ENCODE measurements at regions of chr19 and their contacts with region 1.

Region 1: DNA sequence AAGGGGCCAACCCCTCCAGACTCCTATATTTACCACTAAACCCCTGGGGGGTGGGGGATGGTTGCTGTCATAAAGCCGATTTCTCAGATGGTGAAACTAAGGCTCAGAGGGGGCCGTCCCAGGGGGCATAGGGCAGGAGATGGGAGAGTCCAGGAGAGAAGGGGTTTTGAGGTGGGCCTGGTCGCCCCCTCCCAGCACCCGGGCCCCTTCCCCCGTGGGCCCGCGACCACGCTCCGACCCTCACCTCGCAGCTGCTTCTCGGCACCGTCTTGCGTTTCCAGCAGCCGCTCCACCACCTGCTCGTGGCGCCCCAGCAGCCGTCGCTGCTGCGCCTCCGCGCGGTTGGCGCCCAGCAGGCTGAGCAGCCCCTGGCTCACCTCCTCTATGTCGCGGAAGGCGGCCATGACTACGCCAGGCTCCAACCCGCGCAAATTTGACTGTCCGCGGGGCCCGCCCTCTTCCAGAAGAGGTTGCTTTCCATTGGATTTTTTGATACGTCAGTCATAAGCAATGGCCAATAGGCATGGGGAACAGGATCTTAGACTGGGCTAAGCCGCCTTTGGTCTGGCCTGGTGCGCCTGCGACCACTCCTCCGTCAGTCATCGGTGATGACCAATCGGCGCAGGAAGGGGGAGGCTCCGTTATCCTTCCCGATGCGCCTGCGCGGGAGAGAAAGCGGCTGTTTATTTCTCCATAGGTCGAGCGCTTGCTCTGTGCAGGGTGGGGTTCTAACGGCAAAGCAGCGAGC is at the start of gene SPC24:
- DNase-seq: peak in 1 of 2 donors; percentile 97
- H3K4me3 ChIP-seq: peak within 1 kb of the TSS; percentile 51 to 61
- H3K27ac ChIP-seq: peak within 1 kb of the TSS; percentile 79
- H3K4me1 ChIP-seq: peaks cover 68% of the 10 kb centered on the region
- H3K27me3 ChIP-seq: no peaks in the 10 kb centered on the region
- CTCF ChIP-seq: no peak
- POLR2A ChIP-seq: peak in 1 of 2 donors; percentile 29
- total RNA-seq, gene SPC24: 2.7 TPM

Region 2: GRCh38 chr19:11179716-11180297 is 24.3 kb after region 1 on chr19:
- intact Hi-C with region 1: no loop called
- DNase-seq: no peak
- H3K4me3 ChIP-seq: no peak overlapping the region
- H3K27ac ChIP-seq: peak overlapping the region; percentile 80
- H3K4me1 ChIP-seq: peaks cover 44% of the 10 kb centered on the region
- H3K27me3 ChIP-seq: no peaks in the 10 kb centered on the region
- CTCF ChIP-seq: no peak
- POLR2A ChIP-seq: no peak

Region 3: GRCh38 chr19:11191273-11191755 is 35.8 kb after region 1 on chr19:
- intact Hi-C with region 1: loop called (anchors 5 kb)
- DNase-seq: no peak
- H3K4me3 ChIP-seq: peak overlapping the region; percentile 3 to 18
- H3K27ac ChIP-seq: peak overlapping the region; percentile 91
- H3K4me1 ChIP-seq: peaks cover 79% of the 10 kb centered on the region
- H3K27me3 ChIP-seq: no peaks in the 10 kb centered on the region
- CTCF ChIP-seq: no peak
- POLR2A ChIP-seq: no peak

Region 4: DNA sequence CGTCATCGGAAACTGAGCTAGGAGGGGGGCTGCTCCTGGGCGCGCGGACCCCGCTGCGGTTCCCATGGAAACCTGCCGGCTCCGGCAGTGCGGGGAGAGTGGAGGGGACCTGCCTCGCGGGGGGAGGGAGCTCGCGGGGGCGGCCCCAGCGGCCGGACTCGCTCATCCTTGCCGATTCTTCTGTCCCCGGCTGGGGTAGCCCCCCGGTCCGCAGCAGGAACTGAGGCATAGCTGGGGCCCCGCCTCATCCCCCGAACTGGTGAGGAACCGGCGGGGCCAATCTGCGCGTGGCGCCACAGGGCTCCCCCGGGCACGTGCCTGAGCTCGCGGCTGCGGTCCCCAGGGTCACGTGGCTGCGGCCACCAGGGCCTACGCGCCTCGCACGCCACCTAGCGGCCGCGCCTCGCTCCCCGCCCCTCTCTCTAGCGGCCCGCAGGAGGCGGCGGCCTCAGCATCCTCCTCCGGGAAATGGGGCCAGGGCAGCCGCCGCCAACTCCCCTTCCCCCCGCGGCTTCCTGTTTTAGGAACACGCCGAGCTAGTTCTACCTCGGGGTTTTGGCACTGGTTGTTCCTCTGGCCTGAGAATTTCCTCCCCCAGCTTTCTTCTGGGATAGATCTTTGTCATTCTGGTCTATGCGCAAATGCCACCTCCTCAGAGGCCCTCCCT is 327.0 kb after region 1 on chr19:
- intact Hi-C with region 1: no loop called
- DNase-seq: no peak
- H3K4me3 ChIP-seq: peak overlapping the region; percentile 23 to 28
- H3K27ac ChIP-seq: no peak overlapping the region
- H3K4me1 ChIP-seq: peaks cover 37% of the 10 kb centered on the region
- H3K27me3 ChIP-seq: no peaks in the 10 kb centered on the region
- CTCF ChIP-seq: peak; percentile 87 to 94 (median 90)
- POLR2A ChIP-seq: no peak

Measured in vagina (tissue), 2 donors.